ENCODE measurements at regions of chr3 and their contacts with region 1.

Region 1: DNA sequence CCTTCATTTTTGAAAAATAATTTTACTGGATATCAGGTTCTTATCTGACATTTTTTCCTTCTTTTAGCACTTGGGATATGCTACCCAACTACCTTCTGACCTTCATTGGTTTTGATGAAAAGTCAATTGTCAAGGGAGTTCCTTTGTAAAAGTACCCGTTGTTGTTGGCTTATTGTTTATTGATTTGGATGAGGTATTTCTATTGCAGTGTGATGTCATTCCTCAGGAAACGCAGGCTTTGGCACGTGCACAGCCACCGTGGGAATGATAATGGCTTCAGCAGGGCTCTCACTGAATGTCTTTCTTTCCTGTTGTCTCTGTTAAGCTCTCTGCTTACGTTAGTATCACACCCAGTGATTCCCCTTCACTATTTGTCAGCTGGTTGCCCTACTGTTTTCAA is 944.6 kb downstream of the CADM2 start:
- DNase-seq: no peak
- ATAC-seq: no peak
- H3K4me3 ChIP-seq: no peak overlapping the region
- H3K27ac ChIP-seq: no peak overlapping the region
- H3K4me1 ChIP-seq: no peaks in the 10 kb centered on the region
- H3K27me3 ChIP-seq: no peaks in the 10 kb centered on the region
- CTCF ChIP-seq: no peak

Region 2: DNA sequence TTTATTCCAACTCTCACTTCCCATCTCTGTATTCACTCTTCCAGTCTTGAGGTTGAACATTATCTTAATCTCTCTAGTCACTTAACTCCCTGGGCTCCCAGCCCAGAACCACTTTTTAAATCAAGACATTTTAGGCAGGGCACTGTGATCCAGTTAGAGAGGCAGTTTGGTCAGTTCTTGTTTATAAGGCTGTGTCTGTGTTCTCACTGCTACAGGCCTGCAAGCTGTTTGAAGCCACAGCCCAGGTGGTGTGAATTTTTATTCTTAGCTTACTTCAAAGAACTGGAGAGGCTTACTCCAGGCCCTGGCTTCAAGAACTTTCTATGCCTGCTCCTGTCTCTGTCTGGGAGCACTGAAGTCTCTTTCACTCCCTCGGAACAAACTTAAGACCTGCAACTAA is 38.5 kb before region 1 on chr3:
- CTCF ChIA-PET with region 1: no interaction called
- POLR2A ChIA-PET with region 1: no interaction called
- intact Hi-C with region 1: loop called (anchors 5 kb)
- DNase-seq: no peak
- ATAC-seq: no peak
- H3K4me3 ChIP-seq: no peak overlapping the region
- H3K27ac ChIP-seq: no peak overlapping the region
- H3K4me1 ChIP-seq: no peaks in the 10 kb centered on the region
- H3K27me3 ChIP-seq: no peaks in the 10 kb centered on the region
- CTCF ChIP-seq: no peak